ENCODE measurements at regions of chr6 and their contacts with region 1.

Region 1: DNA sequence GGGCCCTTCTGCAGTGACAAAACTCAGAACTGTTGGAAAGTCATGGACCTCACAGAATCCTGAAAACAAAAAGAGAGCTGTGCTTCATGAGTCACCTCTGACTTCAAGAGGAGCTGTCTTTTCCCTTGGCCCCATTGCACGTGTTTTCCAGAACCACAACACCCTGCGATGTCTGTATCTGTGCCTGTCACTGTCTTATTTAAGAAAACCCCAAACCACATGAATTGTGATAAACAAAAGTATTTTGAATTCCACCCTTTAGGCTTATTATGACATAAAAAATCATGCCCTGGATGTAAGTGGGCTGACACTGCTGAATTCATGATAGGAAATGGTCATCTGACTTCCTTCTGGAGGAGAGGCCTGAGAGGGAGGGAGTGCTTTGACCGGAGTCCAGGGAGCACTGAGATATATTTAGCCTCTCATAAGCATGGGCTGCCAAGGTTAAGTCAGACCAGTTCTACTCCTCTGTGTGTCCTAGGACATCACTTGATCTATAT is 96.4 kb upstream of the DUSP22 start:
- DNase-seq: no peak
- ATAC-seq: no peak
- H3K4me3 ChIP-seq: no peak overlapping the region
- H3K27ac ChIP-seq: no peak overlapping the region
- H3K4me1 ChIP-seq: no peaks in the 10 kb centered on the region
- H3K27me3 ChIP-seq: no peaks in the 10 kb centered on the region
- CTCF ChIP-seq: no peak

Region 2: DNA sequence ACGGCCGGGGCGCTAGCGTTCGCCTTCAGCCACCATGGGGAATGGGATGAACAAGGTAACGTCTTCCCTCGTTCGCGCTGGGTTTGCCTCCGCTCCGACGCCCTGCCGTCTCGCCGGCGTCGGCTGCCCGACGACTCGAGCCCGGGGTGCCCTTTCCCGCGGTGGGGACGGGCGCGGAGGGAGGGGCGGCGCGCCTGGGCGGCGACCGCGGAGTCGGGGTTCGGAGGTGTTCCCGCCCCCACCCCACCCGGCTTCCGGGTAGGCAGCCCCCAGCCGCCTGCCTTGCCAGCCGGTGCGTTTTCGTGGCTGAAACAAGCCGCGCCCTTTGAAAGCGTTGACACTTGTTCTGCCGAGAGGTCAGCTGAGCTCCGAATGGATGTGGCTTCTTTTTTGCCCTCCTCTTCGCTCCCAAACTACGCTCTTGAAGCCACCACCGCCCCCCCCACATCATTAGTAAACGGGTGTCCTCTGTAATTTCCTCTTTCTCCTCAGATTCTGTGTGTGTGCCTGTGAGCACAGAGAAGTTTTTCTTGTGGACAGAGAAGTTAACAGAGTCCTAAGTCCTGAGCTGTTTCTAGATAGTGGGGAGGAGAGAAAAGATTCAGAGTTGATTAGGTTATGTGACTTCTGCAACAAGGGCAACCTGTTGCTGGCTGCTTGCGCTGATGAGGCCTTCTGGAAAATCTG is 96.7 kb after region 1 on chr6:
- CTCF ChIA-PET with region 1: no interaction called
- POLR2A ChIA-PET with region 1: interaction called, 11 read pairs
- in situ Hi-C with region 1: no loop called
- intact Hi-C with region 1: no loop called
- DNase-seq: no peak
- ATAC-seq: peak; percentile 66
- H3K4me3 ChIP-seq: peak overlapping the region; percentile 55 to 90
- H3K27ac ChIP-seq: peak overlapping the region; percentile 74
- H3K4me1 ChIP-seq: peaks cover 8% of the 10 kb centered on the region; the same call in 1 of the 2 replicates
- H3K27me3 ChIP-seq: 0 out of 2 replicates have a peak, but pooled peaks cover 2% of the 10 kb centered on the region
- CTCF ChIP-seq: peak; percentile 20

Measured in Panc1 (cell line).